ENCODE measurements at regions of chr2 and their contacts with region 1.

Region 1: DNA sequence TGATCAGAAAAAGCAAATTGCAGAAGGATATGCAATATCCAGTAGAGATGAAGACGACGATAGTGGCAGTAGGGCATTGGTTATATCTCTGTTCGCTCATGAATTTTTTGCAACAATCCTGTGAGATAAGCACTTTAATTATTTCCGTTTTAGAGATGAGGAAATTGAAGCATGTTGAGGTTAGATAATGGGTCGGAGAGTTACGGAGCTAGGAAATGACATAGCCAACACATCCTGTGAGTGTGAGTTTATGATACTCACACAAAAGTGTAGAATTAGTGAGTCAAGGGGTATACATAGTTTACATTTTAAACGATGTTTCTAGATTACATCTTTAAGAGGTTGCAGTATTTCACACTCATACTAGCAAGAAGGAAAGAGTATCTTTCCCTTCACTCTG is 123.1 kb upstream of the ARL4C start:
- DNase-seq: peak; percentile 84
- H3K4me3 ChIP-seq: no peak overlapping the region
- H3K27ac ChIP-seq: no peak overlapping the region
- H3K4me1 ChIP-seq: peaks cover 20% of the 10 kb centered on the region
- H3K27me3 ChIP-seq: peaks cover 34 to 41% of the 10 kb centered on the region in 2 experiments
- CTCF ChIP-seq: no peak
- POLR2A ChIP-seq: peak; percentile 73

Region 2: GRCh38 chr2:234679741-234680687 is 60.0 kb after region 1 on chr2:
- CTCF ChIA-PET with region 1: interaction called, 5 read pairs
- POLR2A ChIA-PET with region 1: no interaction called
- dilution Hi-C with region 1: no loop called
- intact Hi-C with region 1: loop called (anchors 1 kb)
- DNase-seq: peak; percentile 93
- H3K4me3 ChIP-seq: no peak overlapping the region
- H3K27ac ChIP-seq: peak overlapping the region; percentile 69
- H3K4me1 ChIP-seq: peaks cover 20% of the 10 kb centered on the region
- H3K27me3 ChIP-seq: no peaks in the 10 kb centered on the region
- CTCF ChIP-seq: no peak
- POLR2A ChIP-seq: no peak

Region 3: DNA sequence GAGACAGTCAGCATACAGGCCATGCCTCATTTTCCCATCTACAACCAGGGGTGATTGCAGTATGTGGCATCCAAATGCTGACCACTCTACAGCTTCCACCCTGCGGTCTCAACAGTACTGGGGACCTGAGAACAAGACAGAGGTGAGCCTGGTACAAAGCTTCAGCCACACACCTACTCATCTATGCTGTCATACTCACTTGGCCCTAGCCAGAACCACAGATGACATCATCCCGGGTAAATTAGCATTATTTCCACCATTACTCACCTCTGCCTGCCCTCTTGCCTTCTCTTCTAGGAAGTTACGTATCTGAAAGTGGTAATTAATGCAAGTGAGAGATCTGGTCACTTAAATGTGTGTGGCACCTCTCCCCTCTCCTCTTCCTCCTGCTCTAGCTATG is 85.1 kb after region 1 on chr2:
- CTCF ChIA-PET with region 1: no interaction called
- POLR2A ChIA-PET with region 1: no interaction called
- dilution Hi-C with region 1: no loop called
- intact Hi-C with region 1: no loop called
- DNase-seq: no peak
- H3K4me3 ChIP-seq: no peak overlapping the region
- H3K27ac ChIP-seq: no peak overlapping the region
- H3K4me1 ChIP-seq: no peaks in the 10 kb centered on the region
- H3K27me3 ChIP-seq: peaks cover 0 to 13% of the 10 kb centered on the region in 2 experiments
- CTCF ChIP-seq: no peak
- POLR2A ChIP-seq: no peak

Region 4: GRCh38 chr2:234823877-234824376 is 203.9 kb after region 1 on chr2:
- CTCF ChIA-PET with region 1: interaction called, 3 read pairs
- POLR2A ChIA-PET with region 1: no interaction called
- dilution Hi-C with region 1: no loop called
- intact Hi-C with region 1: loop called (anchors 5 kb)
- DNase-seq: peak; percentile 98
- H3K4me3 ChIP-seq: no peak overlapping the region
- H3K27ac ChIP-seq: peak overlapping the region; percentile 90
- H3K4me1 ChIP-seq: peaks cover 24% of the 10 kb centered on the region
- H3K27me3 ChIP-seq: no peaks in the 10 kb centered on the region
- CTCF ChIP-seq: no peak
- POLR2A ChIP-seq: peak; percentile 69